ENCODE measurements at regions of chr1 and their contacts with region 1.

Region 1: DNA sequence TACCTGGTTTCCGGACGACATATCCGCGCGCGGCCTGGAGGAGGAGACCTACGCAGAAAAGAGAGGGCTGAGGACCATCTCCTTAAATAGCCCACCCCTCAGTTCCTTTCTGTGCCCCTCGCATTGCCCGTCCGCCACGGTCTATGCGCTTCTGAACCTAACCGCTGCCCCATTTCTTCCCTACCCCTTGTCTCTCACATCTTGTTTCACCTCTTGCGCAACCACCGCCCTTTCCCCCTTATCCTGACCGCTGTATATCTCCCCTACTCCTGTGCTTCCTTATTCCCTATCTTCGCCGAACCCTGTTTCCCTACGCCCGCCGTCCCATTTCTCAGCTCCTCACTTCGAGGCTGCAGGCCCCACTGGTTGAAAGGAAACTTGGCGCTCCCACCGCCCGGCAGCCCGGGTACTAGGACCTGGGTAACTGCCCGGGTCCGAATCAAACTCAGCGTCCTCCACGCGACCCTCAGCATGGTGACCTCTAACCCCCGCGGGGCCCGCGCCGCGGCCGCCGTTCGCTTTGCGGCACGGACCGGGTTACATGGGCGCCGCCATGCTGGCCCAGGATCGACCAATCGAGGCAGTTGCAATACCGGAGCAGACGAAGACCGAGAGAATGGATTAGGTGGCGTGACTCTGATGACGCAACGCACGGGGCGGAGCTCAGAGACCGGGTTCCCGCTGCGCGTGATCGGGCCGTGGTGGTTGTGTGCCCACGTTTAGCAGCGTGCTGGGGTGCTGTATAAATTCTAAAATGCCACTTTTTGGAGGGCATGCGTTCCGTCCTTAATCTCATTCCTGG is at the start of gene MRPS15:
- DNase-seq: peak; percentile 88
- ATAC-seq: peak; percentile 90
- H3K4me3 ChIP-seq: peak within 1 kb of the TSS; percentile 73 to 100
- H3K27ac ChIP-seq: peak within 1 kb of the TSS; percentile 84
- H3K4me1 ChIP-seq: peaks cover 11 to 33% of the 10 kb centered on the region in 2 experiments
- H3K27me3 ChIP-seq: no peaks in the 10 kb centered on the region
- CTCF ChIP-seq: no peak
- POLR2A ChIP-seq: peak; percentile 88
- RAD21 ChIP-seq: no peak
- total RNA-seq, gene MRPS15: 98.7 TPM

Region 2: GRCh38 chr1:36442310-36442709 is 21.7 kb before region 1 on chr1:
- CTCF ChIA-PET with region 1: no interaction called
- POLR2A ChIA-PET with region 1: interaction called, 3 read pairs
- RAD21 ChIA-PET with region 1: no interaction called
- intact Hi-C with region 1: loop called (anchors 2 kb)
- DNase-seq: no peak
- ATAC-seq: no peak
- H3K4me3 ChIP-seq: no peak overlapping the region
- H3K27ac ChIP-seq: no peak overlapping the region
- H3K4me1 ChIP-seq: peaks cover 6 to 16% of the 10 kb centered on the region in 2 experiments
- H3K27me3 ChIP-seq: no peaks in the 10 kb centered on the region
- CTCF ChIP-seq: no peak
- POLR2A ChIP-seq: no peak
- RAD21 ChIP-seq: no peak

Region 3: DNA sequence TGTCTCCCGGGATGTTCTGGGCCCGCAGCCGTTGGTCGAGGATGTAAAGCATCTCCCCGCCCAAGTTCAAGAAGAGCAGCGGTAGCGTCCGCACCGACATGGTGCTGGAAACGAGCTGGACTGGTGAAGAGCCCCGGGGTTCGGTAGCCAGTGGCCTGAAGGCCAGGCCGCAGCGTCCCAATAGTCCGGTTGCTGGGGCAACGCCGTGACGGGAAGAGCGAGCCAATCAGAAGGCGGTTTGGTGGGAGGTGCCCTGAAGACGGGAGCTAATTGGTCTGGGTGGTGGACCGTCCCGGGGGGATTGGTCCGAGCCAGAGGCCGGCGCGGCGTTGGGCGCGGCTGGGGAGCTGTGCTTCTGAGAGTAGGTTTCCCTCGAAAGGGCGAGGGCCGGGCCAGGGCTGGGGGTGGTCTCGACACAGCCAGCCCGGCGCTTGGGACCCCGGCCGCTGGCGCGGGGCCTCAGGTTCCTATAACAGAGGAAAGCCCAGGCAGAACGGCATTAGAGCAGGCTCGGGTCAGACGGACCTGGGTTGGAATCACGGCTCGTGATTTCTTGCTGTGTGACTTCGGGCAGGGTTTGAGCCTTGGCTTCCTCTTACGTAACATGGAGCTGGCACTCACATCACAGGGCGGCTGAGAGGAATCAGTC is 13.6 kb before region 1 on chr1 and contains the start of gene OSCP1:
- CTCF ChIA-PET with region 1: interaction called, 3 read pairs
- POLR2A ChIA-PET with region 1: interaction called, 20 read pairs
- RAD21 ChIA-PET with region 1: no interaction called
- intact Hi-C with region 1: no loop called
- DNase-seq: peak; percentile 90
- ATAC-seq: peak; percentile 96
- H3K4me3 ChIP-seq: peak within 1 kb of the TSS; percentile 65 to 74
- H3K27ac ChIP-seq: peak within 1 kb of the TSS; percentile 62
- H3K4me1 ChIP-seq: peaks cover 3 to 20% of the 10 kb centered on the region in 2 experiments; a peak in 2 of 4 replicates
- H3K27me3 ChIP-seq: no peaks in the 10 kb centered on the region
- CTCF ChIP-seq: no peak
- POLR2A ChIP-seq: peak; percentile 60
- RAD21 ChIP-seq: no peak
- total RNA-seq, gene OSCP1: 4.1 TPM

Region 4: DNA sequence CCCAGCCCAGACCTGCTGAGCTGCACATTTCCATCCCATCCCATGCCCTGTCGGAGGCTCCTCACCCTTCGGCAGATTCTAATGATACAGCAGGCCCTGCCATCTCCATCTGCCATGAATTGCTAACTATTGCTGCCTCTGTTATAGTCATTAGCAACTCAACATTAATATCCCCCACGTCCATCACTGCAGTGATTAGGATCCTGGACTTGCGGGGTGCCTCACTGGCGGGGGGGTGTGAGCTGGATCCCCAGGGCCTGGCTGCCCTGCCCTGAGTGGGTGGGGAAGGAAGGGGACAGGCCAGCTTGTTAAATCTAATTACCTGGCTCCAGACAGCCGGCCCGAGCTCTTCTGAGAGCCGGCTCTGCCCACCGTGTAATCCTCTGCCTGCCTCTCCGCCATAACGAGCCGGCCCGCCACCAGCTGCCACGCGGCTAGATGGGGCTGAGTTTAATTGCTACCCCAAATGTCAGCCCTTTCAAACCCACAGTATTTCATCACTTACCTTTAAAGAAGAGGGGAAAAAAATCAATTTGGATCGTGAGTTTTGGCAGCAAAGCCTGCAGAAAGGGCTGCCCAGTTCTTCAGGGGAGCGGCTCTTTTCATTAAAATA is 246.0 kb after region 1 on chr1:
- CTCF ChIA-PET with region 1: no interaction called
- POLR2A ChIA-PET with region 1: no interaction called
- RAD21 ChIA-PET with region 1: no interaction called
- intact Hi-C with region 1: no loop called
- DNase-seq: no peak
- ATAC-seq: no peak
- H3K4me3 ChIP-seq: no peak overlapping the region
- H3K27ac ChIP-seq: no peak overlapping the region
- H3K4me1 ChIP-seq: no peaks in the 10 kb centered on the region
- H3K27me3 ChIP-seq: peaks cover 91% of the 10 kb centered on the region
- CTCF ChIP-seq: no peak
- POLR2A ChIP-seq: no peak
- RAD21 ChIP-seq: no peak

Measured in HCT116 (cell line).